Aorta (tissue), 5 donors: ENCODE measurements at regions of chr5 and their contacts with region 1.

Region 1: DNA sequence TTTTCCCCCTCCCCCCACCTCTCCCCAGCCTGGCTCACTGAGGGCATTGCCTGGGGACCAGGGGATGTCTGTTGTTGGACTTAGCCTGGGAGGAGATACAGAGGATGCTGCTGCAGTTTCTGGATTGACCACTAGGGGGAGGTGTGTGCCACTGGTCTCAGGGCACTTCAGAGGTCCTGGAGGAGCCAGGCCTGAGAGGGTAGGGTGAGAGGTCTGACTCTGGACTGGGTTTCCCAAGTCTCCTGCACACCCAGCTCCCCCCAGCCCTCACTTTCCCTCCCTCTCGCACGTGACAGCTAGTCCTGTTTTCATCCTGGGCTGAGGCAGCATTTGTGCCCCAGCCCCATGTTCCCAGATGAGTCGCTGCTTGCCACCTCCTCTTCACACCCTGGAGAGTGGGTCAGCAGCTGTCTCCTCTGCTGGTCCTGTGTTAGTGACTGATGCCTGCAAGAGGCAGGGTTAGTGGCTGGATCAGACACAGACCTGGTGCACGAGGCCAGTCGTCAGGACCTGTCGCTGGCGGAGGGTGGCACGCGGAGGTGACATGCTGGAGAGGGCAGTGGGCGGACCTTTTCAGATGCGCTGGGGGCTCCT is 4.4 kb downstream of the IL3 start:
- DNase-seq: peak; percentile 80 to 87
- ATAC-seq: peak; percentile 81
- H3K4me3 ChIP-seq: no peak overlapping the region
- H3K27ac ChIP-seq: no peak overlapping the region
- H3K4me1 ChIP-seq: no peaks in the 10 kb centered on the region
- H3K27me3 ChIP-seq: no peaks in the 10 kb centered on the region

Region 2: DNA sequence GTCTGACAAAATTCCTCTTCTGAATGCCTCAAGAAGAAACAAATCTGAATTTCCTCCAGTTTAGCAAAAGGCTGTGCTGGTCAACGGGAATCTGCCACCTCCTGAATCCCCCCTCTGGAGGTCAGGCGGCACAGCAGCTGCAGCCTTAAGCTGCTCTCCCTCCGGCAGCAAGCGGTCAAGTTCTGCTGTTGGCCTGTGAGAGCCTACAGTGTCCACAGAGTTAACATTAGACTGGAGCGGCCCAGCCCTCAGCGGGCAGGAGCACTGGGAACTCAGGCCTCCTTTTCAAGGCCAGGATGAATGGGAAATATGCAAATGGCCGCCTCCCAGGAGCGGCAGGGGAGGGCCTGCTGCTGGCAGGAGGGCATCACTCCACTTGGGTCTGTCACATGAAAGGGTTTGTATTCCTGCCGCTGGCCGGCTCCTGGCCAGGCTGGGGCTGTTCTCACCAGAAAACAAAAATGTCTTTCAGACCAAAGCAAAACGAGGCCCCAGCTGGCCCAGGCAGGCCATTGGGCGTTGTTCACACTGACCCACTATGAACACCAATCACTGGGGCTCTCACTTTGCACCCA is 61.6 kb before region 1 on chr5:
- intact Hi-C with region 1: no loop called
- DNase-seq: peak; percentile 36 to 61
- ATAC-seq: no peak
- H3K4me3 ChIP-seq: no peak overlapping the region
- H3K27ac ChIP-seq: no peak overlapping the region
- H3K4me1 ChIP-seq: no peaks in the 10 kb centered on the region
- H3K27me3 ChIP-seq: no peaks in the 10 kb centered on the region

Region 3: GRCh38 chr5:132134384-132134783 is 69.5 kb after region 1 on chr5:
- intact Hi-C with region 1: loop called in 1 of 2 experiments (anchors 10 kb)
- DNase-seq: no peak
- ATAC-seq: no peak
- H3K4me3 ChIP-seq: no peak overlapping the region
- H3K27ac ChIP-seq: no peak overlapping the region
- H3K4me1 ChIP-seq: no peaks in the 10 kb centered on the region
- H3K27me3 ChIP-seq: no peaks in the 10 kb centered on the region

Region 4: GRCh38 chr5:132180134-132180745 is 115.4 kb after region 1 on chr5:
- intact Hi-C with region 1: loop called (anchors 5 to 10 kb)
- DNase-seq: no peak
- ATAC-seq: peak; percentile 73
- H3K4me3 ChIP-seq: no peak overlapping the region
- H3K27ac ChIP-seq: no peak overlapping the region
- H3K4me1 ChIP-seq: no peaks in the 10 kb centered on the region
- H3K27me3 ChIP-seq: no peaks in the 10 kb centered on the region

Region 5: DNA sequence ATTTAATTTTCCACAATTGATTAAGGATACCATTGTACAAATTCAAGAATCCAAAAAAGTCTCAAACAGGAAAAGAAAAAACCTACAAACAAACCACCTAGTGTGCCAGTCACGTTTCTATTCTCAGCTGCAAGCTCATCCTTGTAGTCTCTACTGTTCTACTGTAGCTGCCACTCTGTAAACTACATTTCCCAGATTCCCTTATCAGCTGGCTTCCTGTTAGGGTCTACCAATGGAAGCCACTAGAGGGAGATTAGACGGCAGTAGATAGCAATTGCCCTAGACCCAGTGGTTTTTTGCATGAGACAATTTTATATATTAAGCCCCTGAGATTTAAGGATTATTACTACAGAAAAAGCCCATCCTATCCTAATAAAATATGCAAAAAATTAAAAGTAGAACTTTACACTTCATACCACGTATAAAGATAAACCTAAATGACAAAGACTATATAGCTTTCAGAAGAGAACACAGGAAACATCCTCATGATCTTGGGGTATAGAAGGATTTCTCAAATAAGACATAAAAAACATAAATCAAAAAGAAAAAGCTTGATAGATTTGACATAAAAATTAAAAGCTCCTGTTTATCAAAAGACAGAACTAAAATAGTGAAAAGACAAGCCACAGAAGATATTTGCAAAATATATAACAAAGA is 125.5 kb after region 1 on chr5:
- intact Hi-C with region 1: loop called (anchors 5 to 10 kb)
- DNase-seq: no peak
- ATAC-seq: peak; percentile 88
- H3K4me3 ChIP-seq: no peak overlapping the region
- H3K27ac ChIP-seq: no peak overlapping the region
- H3K4me1 ChIP-seq: no peaks in the 10 kb centered on the region
- H3K27me3 ChIP-seq: no peaks in the 10 kb centered on the region